Activated CD4-positive, alpha-beta T cell treated with anti-CD3 and anti-CD28 coated beads for 36 hours (primary cell): ENCODE measurements at regions of chr7 and their contacts with region 1.

Region 1: DNA sequence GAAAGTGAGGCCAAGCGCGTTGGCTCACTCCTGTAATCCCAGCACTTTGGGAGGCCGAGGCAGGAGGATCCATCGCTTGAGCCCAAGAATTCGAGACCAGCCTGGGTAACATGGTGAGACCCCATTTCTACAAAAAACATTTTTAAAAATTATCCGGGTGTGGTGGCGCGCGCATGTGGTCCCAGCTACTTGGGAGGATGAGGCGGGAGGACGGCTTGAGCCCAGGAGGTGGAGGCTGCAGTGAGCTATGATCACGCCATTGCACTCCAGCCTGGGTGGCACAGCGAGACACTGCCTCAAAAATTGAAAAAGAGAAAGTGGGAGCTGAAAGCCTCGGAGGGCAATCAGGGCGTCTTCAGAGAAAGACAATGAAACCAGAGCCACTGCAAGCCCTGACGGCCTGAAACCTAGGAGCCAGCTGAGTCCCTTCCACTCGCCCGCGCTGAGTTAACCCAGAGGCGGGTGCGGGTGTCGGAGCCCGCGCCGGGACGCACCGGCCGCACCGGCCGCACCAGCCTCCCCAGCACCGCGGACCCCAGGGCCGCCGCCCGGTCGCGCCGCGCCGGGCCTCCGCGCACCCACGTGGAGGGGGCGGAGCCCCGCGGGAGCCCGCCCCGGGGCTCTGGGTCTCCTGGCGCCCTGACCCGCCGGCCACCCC is 22.4 kb downstream of the ZFAND2A start:
- DNase-seq: no peak
- ATAC-seq: peak; percentile 54
- H3K4me3 Mint-ChIP-seq: peak overlapping the region; percentile 75
- H3K27ac Mint-ChIP-seq: peak overlapping the region; percentile 69
- H3K4me1 Mint-ChIP-seq: peaks cover 21% of the 10 kb centered on the region
- H3K27me3 Mint-ChIP-seq: no peaks in the 10 kb centered on the region

Region 2: DNA sequence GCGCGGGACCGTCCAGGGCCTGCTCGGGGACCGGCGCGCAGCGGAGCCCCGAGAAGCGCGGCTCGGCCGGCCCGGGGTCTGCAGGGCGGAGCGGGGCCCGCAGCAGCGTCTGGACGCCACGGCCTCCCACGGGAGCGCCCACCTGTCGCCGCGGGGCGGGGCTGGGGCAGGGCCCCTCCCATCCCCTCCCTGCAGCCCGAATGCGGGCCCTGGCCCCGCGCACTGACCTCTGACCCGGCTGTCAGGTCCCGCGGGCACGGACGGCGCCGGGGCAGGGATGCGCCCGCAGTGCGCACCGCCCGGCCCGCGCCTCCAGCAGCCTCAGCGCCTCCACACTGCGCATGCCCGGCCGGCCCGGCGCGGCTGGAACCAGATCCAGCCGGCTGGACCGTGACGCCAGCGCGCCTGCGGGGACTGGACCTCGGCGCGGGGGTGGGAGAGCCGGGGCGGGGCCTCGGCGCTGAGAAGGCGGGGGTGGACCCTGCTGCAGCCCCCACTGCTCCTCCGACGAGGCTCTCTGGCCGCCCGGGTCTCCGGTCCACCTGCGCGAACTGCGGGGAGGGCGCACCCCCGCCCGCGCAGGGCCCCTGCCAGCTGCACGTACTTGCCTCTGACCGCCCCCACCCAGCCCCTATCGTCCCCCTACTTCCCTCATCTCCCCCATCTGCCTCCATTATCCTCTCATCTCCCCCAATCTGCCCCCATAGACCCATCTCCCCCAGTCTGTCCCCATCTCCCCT is 109.4 kb before region 1 on chr7:
- CTCF ChIA-PET with region 1: no interaction called
- POLR2A ChIA-PET with region 1: no interaction called
- intact Hi-C with region 1: loop called in 1 of 2 experiments (anchors 1 kb)
- DNase-seq: peak; percentile 95
- ATAC-seq: peak; percentile 87
- H3K4me3 Mint-ChIP-seq: peak overlapping the region; percentile 69
- H3K27ac Mint-ChIP-seq: peak overlapping the region; percentile 75
- H3K4me1 Mint-ChIP-seq: peaks cover 28% of the 10 kb centered on the region
- H3K27me3 Mint-ChIP-seq: no peaks in the 10 kb centered on the region

Region 3: DNA sequence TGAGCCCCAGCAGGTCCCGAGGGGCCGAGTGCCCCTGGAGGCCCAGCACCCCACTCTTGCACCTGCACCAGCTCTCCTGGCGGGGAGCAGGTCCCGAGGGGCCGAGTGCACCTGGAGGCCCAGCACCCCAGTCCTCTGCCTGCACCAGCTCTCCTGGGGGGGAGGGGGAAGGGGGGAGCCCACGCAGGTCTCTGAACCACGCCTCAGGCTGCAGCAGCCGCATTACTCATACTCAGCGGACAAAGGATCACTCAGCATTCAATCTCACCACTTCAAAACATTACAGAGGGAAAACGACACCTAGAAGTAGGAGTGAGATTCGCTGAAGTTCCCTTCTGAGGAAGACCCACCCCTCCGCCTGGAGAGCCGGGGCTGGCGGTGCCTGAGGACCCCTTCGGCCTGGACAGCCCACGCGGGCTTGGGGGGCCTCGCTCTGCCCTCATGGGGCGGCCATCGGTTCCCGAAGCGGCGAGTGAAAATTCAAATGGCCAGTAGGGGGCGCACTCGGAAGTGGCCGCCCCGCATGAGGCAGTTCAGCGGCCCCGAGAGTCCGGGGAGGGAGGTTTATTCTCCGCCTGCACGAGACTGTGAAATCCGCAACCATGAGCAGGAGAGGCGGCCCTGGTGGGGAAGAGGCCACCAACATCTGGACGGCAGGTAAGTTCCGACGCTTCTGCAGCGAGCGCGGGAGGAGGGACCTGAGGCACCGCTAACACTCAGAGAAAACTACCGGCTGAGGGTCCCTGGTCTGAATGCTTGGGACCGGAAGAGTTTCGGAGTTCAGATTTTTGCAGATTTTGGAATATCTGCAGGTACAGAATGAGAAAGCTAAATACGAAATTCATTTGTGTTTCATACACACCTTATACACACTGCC is 50.8 kb before region 1 on chr7:
- CTCF ChIA-PET with region 1: interaction called, 8 read pairs
- POLR2A ChIA-PET with region 1: no interaction called
- intact Hi-C with region 1: loop called in 1 of 2 experiments (anchors 1 kb)
- DNase-seq: peak; percentile 86
- ATAC-seq: peak; percentile 88
- H3K4me3 Mint-ChIP-seq: peak overlapping the region; percentile 53
- H3K27ac Mint-ChIP-seq: peak overlapping the region; percentile 29
- H3K4me1 Mint-ChIP-seq: peaks cover 12% of the 10 kb centered on the region
- H3K27me3 Mint-ChIP-seq: no peaks in the 10 kb centered on the region

Region 4: GRCh38 chr7:1103009-1103788 is 34.4 kb before region 1 on chr7:
- CTCF ChIA-PET with region 1: interaction called, 3 read pairs
- POLR2A ChIA-PET with region 1: no interaction called
- intact Hi-C with region 1: loop called in 1 of 2 experiments (anchors 1 kb)
- DNase-seq: peak; percentile 61
- ATAC-seq: peak; percentile 84
- H3K4me3 Mint-ChIP-seq: no peak overlapping the region
- H3K27ac Mint-ChIP-seq: peak overlapping the region; percentile 23
- H3K4me1 Mint-ChIP-seq: peaks cover 24% of the 10 kb centered on the region
- H3K27me3 Mint-ChIP-seq: no peaks in the 10 kb centered on the region

Region 5: DNA sequence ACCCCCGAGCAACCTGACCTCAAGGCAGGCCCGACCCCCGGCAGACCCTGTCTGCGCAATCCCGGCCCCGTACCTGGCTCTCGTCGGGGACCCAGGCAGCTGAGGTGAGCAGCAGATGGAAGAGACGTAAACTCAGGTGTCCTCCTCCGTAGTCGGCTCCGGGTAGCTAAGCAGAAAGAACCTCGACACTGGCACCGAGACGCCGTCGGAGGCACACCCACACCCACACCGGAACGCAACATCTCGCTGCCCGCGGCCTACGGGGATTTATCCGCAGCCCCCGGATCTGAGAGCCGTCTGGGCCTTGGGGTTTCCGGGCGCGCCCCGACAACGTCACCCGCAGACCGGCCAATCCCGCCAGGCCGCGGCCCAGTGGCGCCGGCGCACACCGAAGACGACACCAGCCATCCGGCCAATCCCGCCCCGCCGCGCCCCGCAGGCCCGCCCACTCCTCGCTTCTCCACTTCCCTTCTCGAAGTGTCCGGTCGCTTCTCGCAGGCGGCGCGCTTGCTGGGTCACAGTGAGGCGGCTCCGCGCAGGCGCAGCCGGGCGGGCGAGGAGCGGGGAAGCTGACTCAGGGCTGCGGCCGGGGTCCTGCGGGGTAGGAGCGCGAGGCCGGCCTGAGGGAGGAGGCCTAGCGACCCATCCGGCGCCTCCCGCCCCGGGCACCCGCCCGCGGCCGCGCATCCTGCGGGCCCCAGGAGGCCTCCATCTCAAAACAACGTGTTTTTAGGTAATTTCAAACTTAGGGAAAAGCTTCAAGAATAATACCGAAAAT is 22.4 kb after region 1 on chr7 and contains the start of gene ZFAND2A:
- CTCF ChIA-PET with region 1: interaction called, 7 read pairs
- POLR2A ChIA-PET with region 1: interaction called, 7 read pairs
- intact Hi-C with region 1: loop called (anchors 1 kb)
- DNase-seq: peak; percentile 99
- ATAC-seq: peak; percentile 98
- H3K4me3 Mint-ChIP-seq: peak within 1 kb of the TSS; percentile 84
- H3K27ac Mint-ChIP-seq: peak within 1 kb of the TSS; percentile 90
- H3K4me1 Mint-ChIP-seq: peaks cover 22% of the 10 kb centered on the region
- H3K27me3 Mint-ChIP-seq: no peaks in the 10 kb centered on the region
- total RNA-seq, gene ZFAND2A: 21.6 to 25.2 TPM

Region 6: DNA sequence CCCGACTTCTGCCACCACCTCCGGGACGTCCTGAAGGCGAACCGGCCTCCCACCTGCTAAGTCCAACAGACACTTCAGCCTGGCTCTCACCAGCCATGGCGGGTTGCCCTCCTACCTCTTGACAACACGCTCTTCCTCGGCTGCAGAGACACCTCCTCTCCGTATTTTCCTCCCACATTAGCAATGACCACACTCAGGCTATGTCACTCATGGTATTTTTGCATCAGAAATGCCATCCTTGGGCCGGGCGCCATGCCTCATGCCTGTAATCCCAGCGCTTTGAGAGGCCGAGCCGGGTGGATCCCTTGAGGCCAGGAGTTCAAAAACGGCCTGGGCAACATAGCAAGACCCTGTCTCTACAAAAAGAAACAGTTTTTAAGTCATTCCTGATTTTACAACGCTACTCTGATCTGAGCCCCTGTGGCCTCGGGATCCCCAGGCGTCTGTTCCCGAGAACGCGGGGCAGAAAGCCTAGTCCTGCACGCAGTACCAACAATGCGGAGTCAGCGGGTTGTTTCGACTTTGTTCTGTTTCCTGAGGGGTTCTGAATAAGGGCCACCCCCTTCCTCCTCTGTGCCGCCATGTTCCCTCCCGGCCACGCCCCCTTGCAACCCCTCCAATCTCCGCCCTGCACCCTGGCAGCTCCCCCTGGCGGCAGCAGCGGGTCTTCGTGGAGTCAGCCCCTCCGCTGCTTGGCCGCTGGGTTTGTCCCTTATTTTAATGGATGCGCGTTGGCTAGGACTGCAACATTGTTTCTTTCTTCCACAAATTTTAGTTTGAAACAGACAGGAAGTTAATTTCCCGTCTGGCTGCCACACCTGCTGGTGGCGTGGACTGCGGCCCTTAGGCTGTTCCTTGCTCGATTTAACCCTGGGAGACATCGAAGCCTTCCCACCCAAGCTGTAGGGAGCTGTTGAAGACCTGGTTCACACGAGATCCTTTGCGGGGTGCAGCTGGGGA is 32.0 kb after region 1 on chr7:
- CTCF ChIA-PET with region 1: interaction called, 6 read pairs
- POLR2A ChIA-PET with region 1: no interaction called
- intact Hi-C with region 1: loop called in 1 of 2 experiments (anchors 1 kb)
- DNase-seq: peak; percentile 98
- ATAC-seq: peak; percentile 99
- H3K4me3 Mint-ChIP-seq: peak overlapping the region; percentile 71
- H3K27ac Mint-ChIP-seq: peak overlapping the region; percentile 94
- H3K4me1 Mint-ChIP-seq: peaks cover 12% of the 10 kb centered on the region
- H3K27me3 Mint-ChIP-seq: no peaks in the 10 kb centered on the region

Region 7: DNA sequence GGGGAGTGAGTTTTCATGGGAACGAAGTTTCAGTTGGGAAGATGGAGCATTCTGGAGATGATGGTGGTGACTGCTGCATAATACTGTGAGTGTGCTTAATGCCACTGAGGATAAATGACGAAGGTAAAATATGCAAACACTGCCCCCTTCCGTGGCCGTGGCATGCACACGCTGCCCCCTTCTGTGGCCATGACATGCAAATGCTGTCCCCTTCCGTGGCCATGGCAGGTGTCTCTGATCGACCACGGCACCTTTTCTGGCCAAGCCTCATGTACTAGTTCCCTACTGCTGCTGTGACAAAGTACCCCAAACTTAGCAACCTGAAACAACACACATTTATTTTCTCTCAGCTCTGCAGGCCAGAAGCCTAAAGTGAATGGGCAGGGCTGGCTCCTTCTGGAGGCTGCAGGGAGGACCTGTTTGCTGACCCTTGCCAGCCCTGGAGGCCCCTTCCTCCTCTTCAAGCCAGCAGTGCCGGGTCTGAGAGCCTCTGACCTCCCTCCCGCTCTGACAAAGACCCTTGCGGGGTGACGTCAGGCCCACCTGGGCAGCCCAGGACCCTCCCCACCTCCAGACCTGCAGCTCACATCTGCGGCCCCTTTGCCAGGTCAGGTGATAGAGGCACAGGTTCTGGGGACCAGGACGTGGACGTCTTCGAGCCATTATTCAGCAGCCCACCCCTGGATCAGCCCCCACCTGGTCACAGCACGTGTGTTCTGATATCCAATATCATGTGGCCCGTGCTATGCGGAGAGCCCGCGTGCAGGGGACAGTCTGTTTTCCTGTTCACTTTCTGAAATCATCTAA is 239.7 kb after region 1 on chr7:
- CTCF ChIA-PET with region 1: no interaction called
- POLR2A ChIA-PET with region 1: no interaction called
- intact Hi-C with region 1: no loop called
- DNase-seq: no peak
- ATAC-seq: no peak
- H3K4me3 Mint-ChIP-seq: no peak overlapping the region
- H3K27ac Mint-ChIP-seq: no peak overlapping the region
- H3K4me1 Mint-ChIP-seq: no peaks in the 10 kb centered on the region
- H3K27me3 Mint-ChIP-seq: peaks cover 22% of the 10 kb centered on the region

Region 8: GRCh38 chr7:1447551-1448244 is 310.1 kb after region 1 on chr7:
- CTCF ChIA-PET with region 1: no interaction called
- POLR2A ChIA-PET with region 1: no interaction called
- intact Hi-C with region 1: no loop called
- DNase-seq: no peak
- ATAC-seq: no peak
- H3K4me3 Mint-ChIP-seq: no peak overlapping the region
- H3K27ac Mint-ChIP-seq: no peak overlapping the region
- H3K4me1 Mint-ChIP-seq: no peaks in the 10 kb centered on the region
- H3K27me3 Mint-ChIP-seq: no peaks in the 10 kb centered on the region

Region 9: DNA sequence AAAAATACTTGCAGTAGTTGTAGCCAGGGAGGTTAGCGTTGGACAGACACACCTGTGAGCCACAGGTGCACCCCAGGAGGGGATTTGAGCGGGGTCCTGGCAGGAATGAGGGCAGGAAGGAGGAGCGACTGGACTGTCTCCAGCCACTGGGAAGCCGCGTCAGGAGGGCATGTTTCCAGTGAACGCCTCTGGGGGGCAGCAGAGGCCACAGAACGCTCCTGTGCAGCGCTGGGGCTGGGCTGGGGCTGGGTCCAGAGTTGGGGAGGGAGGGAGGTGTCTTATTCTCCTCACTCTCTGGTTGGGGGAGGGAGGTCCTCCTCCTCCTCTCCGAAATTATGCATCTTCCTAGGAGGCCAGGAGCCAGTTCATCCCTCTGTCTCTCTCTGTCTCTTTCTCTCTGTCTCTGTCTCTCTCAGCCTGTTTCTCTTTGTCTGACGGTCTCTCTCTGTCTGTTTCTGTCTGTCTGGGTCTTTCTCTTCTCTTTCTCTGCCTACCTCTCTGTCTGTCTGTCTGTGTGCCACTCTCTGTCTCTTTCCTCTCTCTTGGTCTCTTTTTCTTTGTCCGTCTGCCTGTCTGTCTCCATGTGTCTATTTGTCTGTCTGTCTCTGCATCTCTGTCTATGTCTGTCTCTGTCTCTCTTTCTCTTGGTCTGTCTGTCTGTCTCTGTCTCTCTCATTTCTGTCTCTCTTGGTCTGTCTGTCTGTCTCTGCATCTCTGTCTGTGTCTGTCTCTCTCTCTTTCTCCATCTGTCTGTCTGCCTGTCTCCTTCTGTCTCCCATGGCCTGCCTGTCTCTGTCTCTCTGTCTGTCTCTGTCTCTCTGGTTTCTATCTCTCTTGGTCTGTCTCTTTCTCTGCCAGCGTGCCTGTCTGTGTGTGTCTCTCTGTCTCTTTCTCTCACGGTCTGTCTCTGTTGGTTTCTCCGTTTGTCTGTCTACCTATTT is 442.1 kb after region 1 on chr7:
- CTCF ChIA-PET with region 1: no interaction called
- POLR2A ChIA-PET with region 1: no interaction called
- intact Hi-C with region 1: no loop called
- DNase-seq: peak; percentile 86
- ATAC-seq: peak; percentile 100
- H3K4me3 Mint-ChIP-seq: no peak overlapping the region
- H3K27ac Mint-ChIP-seq: no peak overlapping the region
- H3K4me1 Mint-ChIP-seq: peaks cover 4% of the 10 kb centered on the region
- H3K27me3 Mint-ChIP-seq: no peaks in the 10 kb centered on the region